ENCODE measurements at regions of chr16 and their contacts with region 1.

Region 1: GRCh38 chr16:69424053-69424934 is at the start of gene CYB5B:
- DNase-seq: peak; percentile 95
- H3K4me3 Mint-ChIP-seq: peak within 1 kb of the TSS; percentile 96
- H3K27ac Mint-ChIP-seq: peak within 1 kb of the TSS; percentile 89
- H3K4me1 Mint-ChIP-seq: peaks cover 23% of the 10 kb centered on the region
- H3K27me3 Mint-ChIP-seq: no peaks in the 10 kb centered on the region
- total RNA-seq, gene CYB5B: 201 and 204 TPM in 2 replicates

Region 2: DNA sequence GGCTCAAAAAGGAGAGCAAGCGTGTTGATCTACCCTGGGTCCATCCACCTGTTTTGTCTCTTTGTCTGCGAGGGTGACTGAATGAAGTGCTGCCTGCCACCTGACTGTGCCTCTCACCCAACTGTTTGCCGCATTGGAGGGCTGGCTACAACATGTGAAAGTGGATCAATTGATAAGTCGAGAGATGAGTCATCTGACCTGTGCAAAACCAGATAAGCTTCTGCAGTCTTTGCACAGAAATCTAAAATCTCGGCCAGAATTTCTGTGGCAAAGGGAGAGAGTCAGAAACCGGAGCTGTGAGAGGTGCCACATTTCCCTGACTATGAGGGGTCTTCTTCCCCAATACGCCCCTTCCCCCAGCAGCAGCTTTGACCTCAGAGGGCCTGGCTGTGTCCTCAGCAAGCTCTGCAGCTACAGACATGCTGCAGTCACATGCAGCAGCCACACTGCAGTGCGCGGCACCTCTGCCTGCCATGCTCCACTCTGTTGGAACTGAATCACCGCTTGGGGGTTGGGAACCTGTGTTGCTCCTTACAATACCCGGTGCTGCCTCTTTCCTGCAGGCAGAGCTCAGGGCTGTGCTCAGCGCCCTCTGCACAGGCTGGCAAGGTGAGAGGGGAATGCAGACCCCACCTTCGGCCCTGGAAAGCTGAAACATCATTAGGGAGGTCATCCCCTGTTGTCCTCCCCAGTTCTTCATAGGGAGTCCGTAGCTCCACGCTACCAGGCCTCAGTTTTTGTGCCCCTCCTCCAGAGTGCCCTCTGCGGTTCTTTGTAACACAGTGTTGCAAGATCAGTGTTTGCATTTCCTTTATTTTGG is 335.0 kb before region 1 on chr16:
- intact Hi-C with region 1: no loop called
- DNase-seq: peak; percentile 33
- H3K4me3 Mint-ChIP-seq: no peak overlapping the region
- H3K27ac Mint-ChIP-seq: no peak overlapping the region
- H3K4me1 Mint-ChIP-seq: peaks cover 24% of the 10 kb centered on the region
- H3K27me3 Mint-ChIP-seq: peaks cover 4% of the 10 kb centered on the region

Region 3: DNA sequence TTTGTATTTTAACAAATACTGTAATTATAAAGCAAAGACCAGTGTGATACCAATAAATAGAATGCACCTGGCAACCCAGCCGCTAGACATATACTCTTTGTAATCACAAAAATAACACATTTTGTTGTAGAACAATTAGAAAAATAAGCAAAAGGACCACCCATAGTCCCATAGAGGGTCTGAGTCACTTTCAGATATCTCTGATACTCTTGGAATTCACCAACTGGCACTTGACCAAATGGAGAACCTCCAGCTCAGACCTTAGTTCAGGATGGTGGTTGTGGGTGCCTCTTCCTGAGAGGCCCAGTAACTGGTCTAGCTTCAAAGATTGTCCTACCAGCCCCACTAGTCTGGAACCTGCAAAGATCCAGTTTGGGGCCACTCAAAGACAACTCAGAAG is 37.7 kb before region 1 on chr16:
- intact Hi-C with region 1: loop called (anchors 5 kb)
- DNase-seq: no peak
- H3K4me3 Mint-ChIP-seq: no peak overlapping the region
- H3K27ac Mint-ChIP-seq: no peak overlapping the region
- H3K4me1 Mint-ChIP-seq: peaks cover 20% of the 10 kb centered on the region
- H3K27me3 Mint-ChIP-seq: no peaks in the 10 kb centered on the region

Region 4: GRCh38 chr16:69396187-69397061 is 27.9 kb before region 1 on chr16:
- intact Hi-C with region 1: loop called (anchors 2 kb)
- DNase-seq: peak; percentile 57
- H3K4me3 Mint-ChIP-seq: no peak overlapping the region
- H3K27ac Mint-ChIP-seq: peak overlapping the region; percentile 61
- H3K4me1 Mint-ChIP-seq: peaks cover 27% of the 10 kb centered on the region
- H3K27me3 Mint-ChIP-seq: peaks cover 5% of the 10 kb centered on the region

Region 5: GRCh38 chr16:69443927-69444631 is 19.8 kb after region 1 on chr16:
- intact Hi-C with region 1: loop called (anchors 2 kb)
- DNase-seq: no peak
- H3K4me3 Mint-ChIP-seq: peak overlapping the region; percentile 70
- H3K27ac Mint-ChIP-seq: peak overlapping the region; percentile 92
- H3K4me1 Mint-ChIP-seq: peaks cover 42% of the 10 kb centered on the region
- H3K27me3 Mint-ChIP-seq: no peaks in the 10 kb centered on the region

Region 6: DNA sequence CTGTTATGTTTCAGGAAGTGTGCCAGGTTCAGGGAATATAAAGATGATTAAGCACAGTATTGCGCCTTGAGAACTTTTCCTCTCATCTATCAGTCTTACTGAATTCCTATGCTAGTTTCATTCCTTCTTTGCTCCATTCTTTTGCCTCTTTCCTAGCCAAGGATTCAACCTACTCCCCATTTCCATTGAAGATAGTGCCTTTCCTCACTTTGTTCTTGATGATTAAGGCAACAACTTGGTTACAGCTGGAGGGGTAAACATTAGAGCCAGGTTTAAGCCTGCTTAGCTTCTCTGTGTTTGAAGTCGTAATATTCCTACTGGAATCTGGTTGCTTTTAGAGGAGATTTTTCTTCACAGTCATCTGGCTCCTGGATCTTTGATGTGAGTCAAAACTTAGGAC is 226.9 kb after region 1 on chr16:
- intact Hi-C with region 1: no loop called
- DNase-seq: no peak
- H3K4me3 Mint-ChIP-seq: no peak overlapping the region
- H3K27ac Mint-ChIP-seq: no peak overlapping the region
- H3K4me1 Mint-ChIP-seq: no peaks in the 10 kb centered on the region
- H3K27me3 Mint-ChIP-seq: no peaks in the 10 kb centered on the region

Region 7: DNA sequence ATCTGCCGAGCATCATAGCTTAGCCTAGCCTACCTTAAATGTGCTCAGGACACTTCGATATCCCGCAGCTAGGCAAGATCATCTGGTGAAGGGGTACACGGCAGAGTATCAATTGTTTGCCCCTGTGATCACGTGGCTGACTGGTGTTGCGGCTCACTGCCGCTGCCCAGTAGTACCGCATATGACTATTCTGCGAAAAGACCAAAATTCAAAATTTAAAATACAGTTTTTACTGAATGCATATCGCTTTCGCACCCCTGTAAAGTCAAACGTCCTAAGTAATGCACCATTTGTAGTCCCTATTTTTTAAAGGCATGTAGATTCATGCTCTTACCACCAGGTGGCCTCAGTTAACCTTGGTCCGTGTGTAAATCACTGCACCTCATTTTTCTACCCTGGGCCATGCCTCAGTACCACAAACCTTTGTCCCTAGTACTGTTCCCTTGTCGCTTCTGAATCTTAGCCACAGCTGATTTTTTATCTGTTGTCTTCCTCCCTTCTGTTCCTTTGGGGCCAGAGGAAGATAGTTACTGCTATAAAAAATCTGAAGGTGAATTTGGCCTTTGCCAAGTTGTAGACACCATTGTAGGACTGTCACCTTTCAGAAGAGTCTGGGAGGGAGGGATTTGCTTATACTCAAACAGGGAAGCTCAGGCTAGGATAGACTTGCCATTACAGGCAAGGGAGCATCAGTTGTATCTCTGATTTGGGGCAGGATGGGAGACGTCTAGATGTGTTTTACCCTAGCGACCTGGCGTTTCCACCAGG is 372.2 kb after region 1 on chr16:
- intact Hi-C with region 1: no loop called
- DNase-seq: no peak
- H3K4me3 Mint-ChIP-seq: no peak overlapping the region
- H3K27ac Mint-ChIP-seq: no peak overlapping the region
- H3K4me1 Mint-ChIP-seq: peaks cover 3% of the 10 kb centered on the region
- H3K27me3 Mint-ChIP-seq: no peaks in the 10 kb centered on the region

Measured in activated T-helper 2 cell treated with anti-CD3 and anti-CD28 coated beads, Interferon-gamma antibody, Interleukin-2, Interleukin-4, amounts not matched to agents 10 μg/mL and 5 μg/mL and 100 μg/mL, durations not matched to agents 14 hours and 24 hours and 36 hours (primary cell).